Psoas muscle (tissue), 8 donors: ENCODE measurements at regions of chr3 and their contacts with region 1.

Region 1: GRCh38 chr3:66253790-66254620 is 33.2 kb downstream of the SLC25A26 start:
- DNase-seq: no peak
- ATAC-seq: peak in 1 of 4 donors; percentile 70
- H3K4me3 ChIP-seq: no peak overlapping the region
- H3K27ac ChIP-seq: no peak overlapping the region
- H3K4me1 ChIP-seq: no peaks in the 10 kb centered on the region
- H3K27me3 ChIP-seq: no peaks in the 10 kb centered on the region
- CTCF ChIP-seq: peak; percentile 88

Region 2: GRCh38 chr3:66822186-66823008 is 568.4 kb after region 1 on chr3:
- intact Hi-C with region 1: loop called (anchors 5 kb)
- DNase-seq: peak; percentile 22 to 66
- ATAC-seq: peak; percentile 83 to 95 (median 88)
- H3K4me3 ChIP-seq: no peak overlapping the region
- H3K27ac ChIP-seq: no peak overlapping the region
- H3K4me1 ChIP-seq: no peaks in the 10 kb centered on the region
- H3K27me3 ChIP-seq: no peaks in the 10 kb centered on the region
- CTCF ChIP-seq: peak; percentile 77